GM12878 (cell line): ENCODE measurements at regions of chr2 and their contacts with region 1.

Region 1: DNA sequence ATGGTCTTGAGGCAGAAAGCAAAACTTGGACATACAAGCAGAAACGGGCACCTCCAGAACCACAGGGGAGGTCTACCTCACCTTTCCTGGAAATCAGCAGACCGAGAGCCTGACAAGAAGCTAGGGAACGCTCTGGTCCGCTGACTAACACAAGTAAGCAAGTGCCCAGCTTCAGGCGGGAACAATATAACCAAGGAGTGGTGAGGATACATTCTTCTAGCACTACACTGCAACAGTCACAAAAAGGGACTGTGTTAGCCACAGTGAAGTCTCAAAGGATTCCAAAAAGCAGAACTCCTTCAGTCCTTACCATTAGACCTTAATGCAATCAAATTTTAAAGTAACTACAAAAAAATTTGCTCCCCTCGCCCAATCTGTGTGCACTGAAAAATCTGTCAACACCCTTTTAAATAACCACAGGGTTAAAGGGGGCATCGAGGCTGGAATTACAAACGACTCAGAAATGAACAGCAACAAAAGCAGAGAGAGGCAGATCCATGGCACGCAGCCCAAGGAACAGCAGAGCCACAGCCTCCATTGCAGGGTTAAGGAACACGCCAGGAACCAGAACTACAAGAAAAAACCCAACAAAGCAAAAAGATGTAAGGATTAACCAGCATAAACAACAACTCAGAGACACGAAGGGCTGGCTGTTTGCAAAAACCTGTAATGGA is 7.1 kb downstream of the THAP4 start:
- DNase-seq: no peak
- ATAC-seq: peak; percentile 49; the same call in 2 of the 3 replicates
- H3K4me3 ChIP-seq: no peak overlapping the region
- H3K27ac ChIP-seq: no peak overlapping the region
- H3K4me1 ChIP-seq: peaks cover under 1% of the 10 kb centered on the region; the same call in 1 of the 2 replicates
- H3K27me3 ChIP-seq: no peaks in the 10 kb centered on the region
- CTCF ChIP-seq: no peak
- EP300 ChIP-seq: no peak
- POLR2A ChIP-seq: no peak
- RAD21 ChIP-seq: no peak

Region 2: DNA sequence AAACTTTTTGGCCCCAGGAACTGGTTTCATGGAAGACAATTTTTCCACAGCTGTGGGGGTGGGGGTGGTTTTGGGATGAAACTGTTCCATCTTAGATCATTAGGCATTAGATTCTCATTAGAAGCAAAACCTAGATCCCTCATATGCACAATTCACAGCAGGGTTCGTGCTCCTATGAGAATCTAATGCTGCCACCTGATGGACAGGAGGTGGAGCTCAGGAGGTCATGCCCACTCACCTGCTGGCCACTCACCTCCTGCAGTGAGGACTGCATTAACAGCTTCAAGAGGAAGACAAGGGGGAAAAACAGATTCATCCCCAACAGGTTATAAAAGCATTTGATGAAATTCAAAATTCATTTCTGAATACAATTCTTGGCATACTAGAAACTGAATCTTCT is 31.4 kb before region 1 on chr2:
- CTCF ChIA-PET with region 1: no interaction called
- POLR2A ChIA-PET with region 1: no interaction called
- RAD21 ChIA-PET with region 1: no interaction called
- SMC1A ChIA-PET with region 1: no interaction called
- in situ Hi-C with region 1: no loop called
- intact Hi-C with region 1: no loop called
- DNase-seq: no peak
- ATAC-seq: peak; percentile 38; the same call in 1 of the 3 replicates
- H3K4me3 ChIP-seq: no peak overlapping the region
- H3K27ac ChIP-seq: no peak overlapping the region
- H3K4me1 ChIP-seq: no peaks in the 10 kb centered on the region
- H3K27me3 ChIP-seq: no peaks in the 10 kb centered on the region
- CTCF ChIP-seq: peak; percentile 25 to 36 (median 32); a peak in 4 of 6 replicates
- EP300 ChIP-seq: no peak
- POLR2A ChIP-seq: no peak
- RAD21 ChIP-seq: peak; percentile 43

Region 3: DNA sequence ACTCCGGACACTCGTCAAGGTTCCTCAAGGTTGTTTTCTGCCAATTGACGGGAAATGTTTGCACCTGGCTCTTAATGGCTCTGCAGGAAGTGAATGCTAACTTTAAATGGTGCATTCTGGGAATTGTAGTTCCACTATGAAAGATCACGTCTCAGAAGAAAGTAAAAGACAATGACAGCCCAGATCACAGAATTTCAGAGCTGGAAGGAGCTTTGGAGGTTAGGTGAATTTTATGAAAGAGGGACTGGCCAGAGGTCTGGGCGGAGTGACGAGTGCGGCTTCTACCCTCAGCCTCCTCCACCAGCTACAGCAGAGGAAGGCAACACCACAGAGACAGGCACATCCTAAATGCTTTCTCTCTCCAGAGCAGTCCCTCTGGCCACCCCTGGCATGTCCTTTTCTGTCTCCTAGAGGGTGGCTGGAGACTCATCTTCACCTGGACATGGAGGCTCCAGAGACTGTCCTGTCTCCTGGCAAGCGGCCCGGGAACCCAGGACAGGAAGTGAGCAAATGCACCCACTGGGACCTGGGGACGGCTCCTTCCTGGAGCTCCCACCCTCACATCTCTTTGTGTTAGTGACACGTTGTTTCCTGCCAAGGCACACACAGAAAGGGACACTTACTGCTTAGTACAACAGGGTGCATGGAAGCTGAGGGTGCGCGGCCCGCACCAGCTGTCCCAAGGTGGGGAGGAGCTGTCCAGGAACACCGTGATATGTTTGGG is 12.3 kb before region 1 on chr2:
- CTCF ChIA-PET with region 1: interaction called, 3 read pairs
- POLR2A ChIA-PET with region 1: interaction called, 10 read pairs
- RAD21 ChIA-PET with region 1: no interaction called
- SMC1A ChIA-PET with region 1: interaction called, 4 read pairs
- in situ Hi-C with region 1: no loop called
- intact Hi-C with region 1: no loop called
- DNase-seq: peak; percentile 35
- ATAC-seq: peak; percentile 89
- H3K4me3 ChIP-seq: peak overlapping the region; percentile 64
- H3K27ac ChIP-seq: peak overlapping the region; percentile 77
- H3K4me1 ChIP-seq: peaks cover 9% of the 10 kb centered on the region
- H3K27me3 ChIP-seq: no peaks in the 10 kb centered on the region
- CTCF ChIP-seq: no peak
- EP300 ChIP-seq: no peak
- POLR2A ChIP-seq: peak; percentile 34; the same call in 1 of the 2 replicates
- RAD21 ChIP-seq: no peak

Region 4: GRCh38 chr2:241649404-241649803 is 19.5 kb after region 1 on chr2:
- CTCF ChIA-PET with region 1: no interaction called
- POLR2A ChIA-PET with region 1: no interaction called
- RAD21 ChIA-PET with region 1: no interaction called
- SMC1A ChIA-PET with region 1: no interaction called
- in situ Hi-C with region 1: no loop called
- intact Hi-C with region 1: no loop called
- DNase-seq: no peak
- ATAC-seq: no peak
- H3K4me3 ChIP-seq: no peak overlapping the region
- H3K27ac ChIP-seq: no peak overlapping the region
- H3K4me1 ChIP-seq: no peaks in the 10 kb centered on the region
- H3K27me3 ChIP-seq: no peaks in the 10 kb centered on the region
- CTCF ChIP-seq: no peak
- EP300 ChIP-seq: no peak
- POLR2A ChIP-seq: no peak
- RAD21 ChIP-seq: no peak